Activated CD4-positive, alpha-beta T cell treated with anti-CD3 and anti-CD28 coated beads, Interleukin-2, amount 10 ng/mL, durations not matched to agents 7 days and 5 days (primary cell): ENCODE measurements at regions of chr4 and their contacts with region 1.

Region 1: DNA sequence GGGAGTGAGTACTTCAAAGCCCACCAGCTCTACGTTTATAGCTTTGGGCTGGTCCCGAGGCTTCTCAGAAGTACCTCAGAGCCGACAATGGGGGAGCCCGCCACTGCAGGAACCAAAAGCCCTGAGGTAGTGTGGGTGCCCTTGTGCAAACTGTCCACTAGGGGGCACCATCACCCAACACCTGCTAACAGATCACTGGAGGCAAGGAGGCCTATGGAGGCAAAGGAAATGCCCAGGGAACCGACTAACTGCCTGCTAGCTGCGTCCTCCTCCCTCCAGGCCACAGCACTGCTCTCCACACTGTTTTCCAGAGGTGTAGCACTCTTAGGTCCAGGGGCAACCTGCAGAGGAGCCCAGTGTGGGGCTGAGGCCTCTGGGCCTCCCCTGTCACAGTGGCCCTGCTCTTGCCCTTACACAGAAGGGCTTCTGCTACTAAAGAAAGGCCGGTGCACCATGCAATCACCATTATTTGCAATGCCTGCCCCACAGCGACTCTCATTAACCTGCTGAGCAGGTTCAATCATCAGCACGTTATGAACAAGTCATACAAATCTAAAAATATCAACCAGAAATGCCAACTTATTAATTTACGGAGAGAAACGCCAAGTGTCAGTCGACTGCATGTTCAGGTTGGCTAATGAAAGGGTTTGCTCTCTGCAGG is 159.1 kb downstream of the NSUN7 start:
- DNase-seq: peak; percentile 76
- H3K4me3 Mint-ChIP-seq: no peak overlapping the region
- H3K27ac Mint-ChIP-seq: peak overlapping the region; percentile 42
- H3K4me1 Mint-ChIP-seq: peaks cover 16% of the 10 kb centered on the region
- H3K27me3 Mint-ChIP-seq: no peaks in the 10 kb centered on the region

Region 2: DNA sequence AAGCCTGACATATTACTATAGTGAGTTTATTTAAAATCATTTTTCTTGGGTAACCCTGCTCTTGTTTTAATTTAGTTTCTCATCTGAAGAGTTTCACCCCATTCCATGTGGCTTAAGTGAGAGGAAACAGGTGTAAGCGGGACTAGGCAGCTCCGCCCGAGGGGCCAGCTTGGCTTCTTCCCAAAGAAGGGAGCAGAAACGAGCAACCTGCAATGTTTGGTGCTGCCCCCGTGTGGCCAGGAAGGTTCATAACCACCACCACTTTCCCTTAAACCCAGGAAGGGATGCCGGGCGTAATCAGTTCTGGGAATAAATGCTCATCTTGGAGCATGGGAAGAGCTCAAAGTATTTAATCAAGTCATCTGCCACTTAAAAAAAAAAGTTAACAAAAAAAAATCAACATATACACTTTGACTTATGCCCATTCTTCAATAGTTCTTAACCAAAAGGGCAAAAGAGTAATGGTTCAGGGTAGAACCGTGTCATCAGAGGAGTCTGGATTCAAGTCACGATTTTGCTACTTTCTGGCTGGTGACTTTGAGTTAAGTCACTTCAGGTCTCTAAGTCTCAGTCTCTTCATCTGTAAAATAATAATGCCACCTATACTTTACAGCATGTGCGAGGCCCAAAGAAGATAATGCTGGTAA is 11.2 kb before region 1 on chr4:
- CTCF ChIA-PET with region 1: interaction called, 10 read pairs
- POLR2A ChIA-PET with region 1: no interaction called
- DNase-seq: peak; percentile 60
- H3K4me3 Mint-ChIP-seq: peak overlapping the region; percentile 61
- H3K27ac Mint-ChIP-seq: no peak overlapping the region
- H3K4me1 Mint-ChIP-seq: peaks cover 6% of the 10 kb centered on the region
- H3K27me3 Mint-ChIP-seq: peaks cover 5% of the 10 kb centered on the region

Region 3: DNA sequence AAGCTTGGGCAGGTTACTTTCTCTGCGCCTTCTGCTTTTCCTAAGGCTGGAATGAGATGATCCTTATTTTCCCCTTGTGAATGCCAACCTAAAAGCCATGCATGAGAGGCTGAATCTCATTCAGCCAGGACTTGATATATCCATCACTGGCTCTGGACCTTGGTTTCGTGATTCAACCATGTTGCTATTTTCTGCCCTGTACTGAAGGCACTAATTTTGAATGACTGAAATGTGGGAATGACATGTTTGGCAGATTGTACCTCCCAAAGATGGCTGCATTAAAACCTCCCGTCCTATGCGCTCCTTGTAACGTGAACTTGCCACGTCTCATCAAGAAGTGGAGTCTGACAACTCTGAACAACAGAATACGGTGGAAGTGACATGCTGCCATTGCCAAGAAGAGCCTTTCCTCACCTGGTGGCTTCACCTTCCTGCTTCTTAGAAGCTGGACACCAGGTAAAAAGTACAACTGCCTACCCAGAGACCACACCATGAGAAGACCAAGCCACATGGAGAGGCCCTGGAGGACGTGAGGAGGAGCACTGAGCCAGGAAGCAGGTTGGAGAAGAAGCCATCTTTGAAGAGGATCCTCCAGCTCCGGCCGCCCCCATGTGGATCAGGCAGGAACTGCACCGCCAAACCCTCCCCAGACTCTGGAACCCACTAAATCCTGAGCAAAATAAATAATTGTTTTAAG is 15.4 kb after region 1 on chr4:
- CTCF ChIA-PET with region 1: interaction called, 42 read pairs
- POLR2A ChIA-PET with region 1: no interaction called
- DNase-seq: peak; percentile 69
- H3K4me3 Mint-ChIP-seq: no peak overlapping the region
- H3K27ac Mint-ChIP-seq: peak overlapping the region; percentile 17
- H3K4me1 Mint-ChIP-seq: peaks cover 4% of the 10 kb centered on the region
- H3K27me3 Mint-ChIP-seq: peaks cover 12% of the 10 kb centered on the region

Region 4: DNA sequence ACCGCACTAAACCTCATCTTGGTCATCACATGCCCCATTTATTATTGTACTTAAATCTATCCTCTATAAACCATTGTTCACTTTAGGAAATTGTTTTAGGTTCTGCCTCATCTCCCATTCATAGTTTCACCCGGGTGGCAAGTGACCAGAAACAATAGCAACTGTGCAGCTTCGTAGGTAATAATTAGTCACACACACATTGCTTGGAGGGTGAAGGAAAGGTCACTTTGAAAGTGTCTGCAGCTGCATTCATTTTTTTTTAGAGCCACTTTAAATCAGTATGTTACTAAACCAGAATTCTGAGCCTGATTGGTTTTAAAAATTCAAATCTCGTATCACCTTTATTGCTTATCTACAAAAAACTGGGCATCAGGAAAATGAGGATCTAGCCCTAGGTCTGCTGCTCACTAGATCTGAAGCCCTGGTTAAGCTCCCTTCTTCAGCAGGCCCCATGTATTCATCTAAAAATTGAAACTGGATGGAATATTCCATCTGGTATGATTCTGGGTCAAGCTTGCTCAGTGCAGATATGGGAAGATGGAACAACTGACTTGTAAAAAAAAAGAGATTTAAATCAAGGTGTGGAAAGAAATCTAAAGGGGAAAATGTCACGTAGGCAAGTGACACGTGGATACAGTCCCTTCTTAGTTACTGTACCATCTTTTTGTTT is 691.5 kb after region 1 on chr4:
- CTCF ChIA-PET with region 1: no interaction called
- POLR2A ChIA-PET with region 1: no interaction called
- DNase-seq: no peak
- H3K4me3 Mint-ChIP-seq: no peak overlapping the region
- H3K27ac Mint-ChIP-seq: no peak overlapping the region
- H3K4me1 Mint-ChIP-seq: no peaks in the 10 kb centered on the region
- H3K27me3 Mint-ChIP-seq: peaks cover 2% of the 10 kb centered on the region